ENCODE measurements at regions of chr4 and their contacts with region 1.

Region 1: DNA sequence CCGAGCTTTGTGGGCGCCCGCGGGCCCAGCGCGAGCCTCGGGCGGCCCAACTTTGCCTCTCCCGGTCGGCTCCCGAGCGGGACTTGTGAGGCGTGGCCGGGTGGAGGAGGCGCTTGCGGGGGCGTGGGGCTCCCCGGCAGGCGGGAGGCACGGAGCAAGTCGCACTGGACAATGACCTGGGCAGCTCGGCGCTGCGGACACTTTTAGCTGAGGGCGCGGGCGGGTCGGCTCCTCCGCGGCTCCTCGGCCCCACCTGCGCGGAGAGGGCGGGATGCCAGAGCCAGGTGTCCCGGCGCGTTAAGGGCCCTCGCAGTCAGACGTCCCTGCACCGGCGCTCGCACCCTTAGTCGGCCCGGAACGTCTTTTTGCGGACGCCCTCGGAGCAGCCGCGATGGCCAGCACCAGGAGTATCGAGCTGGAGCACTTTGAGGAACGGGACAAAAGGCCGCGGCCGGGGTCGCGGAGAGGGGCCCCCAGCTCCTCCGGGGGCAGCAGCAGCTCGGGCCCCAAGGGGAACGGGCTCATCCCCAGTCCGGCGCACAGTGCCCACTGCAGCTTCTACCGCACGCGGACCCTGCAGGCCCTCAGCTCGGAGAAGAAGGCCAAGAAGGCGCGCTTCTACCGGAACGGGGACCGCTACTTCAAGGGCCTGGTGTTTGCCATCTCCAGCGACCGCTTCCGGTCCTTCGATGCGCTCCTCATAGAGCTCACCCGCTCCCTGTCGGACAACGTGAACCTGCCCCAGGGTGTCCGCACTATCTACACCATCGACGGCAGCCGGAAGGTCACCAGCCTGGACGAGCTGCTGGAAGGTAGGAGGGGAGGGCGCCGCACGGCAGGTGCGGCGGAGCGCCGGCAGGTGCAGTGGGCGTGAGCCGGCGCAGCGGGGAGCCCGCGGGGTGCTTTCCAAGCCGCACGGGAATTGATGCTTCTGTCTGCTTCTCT is 664 bp downstream of the DCLK2 start:
- DNase-seq: peak; percentile 6
- H3K4me3 ChIP-seq: peak overlapping the region; percentile 54 to 58
- H3K27ac ChIP-seq: peak overlapping the region; percentile 77 to 81
- H3K4me1 ChIP-seq: no peaks in the 10 kb centered on the region
- H3K27me3 ChIP-seq: no peaks in the 10 kb centered on the region
- CTCF ChIP-seq: no peak
- POLR2A ChIP-seq: no peak

Region 2: GRCh38 chr4:150010525-150011126 is 68.3 kb before region 1 on chr4:
- intact Hi-C with region 1: loop called (anchors 5 kb)
- DNase-seq: peak; percentile 35
- H3K4me3 ChIP-seq: no peak overlapping the region
- H3K27ac ChIP-seq: no peak overlapping the region
- H3K4me1 ChIP-seq: no peaks in the 10 kb centered on the region
- H3K27me3 ChIP-seq: no peaks in the 10 kb centered on the region
- CTCF ChIP-seq: peak in 3 of 4 experiments; percentile 52 to 64 (median 55)
- POLR2A ChIP-seq: no peak

Region 3: DNA sequence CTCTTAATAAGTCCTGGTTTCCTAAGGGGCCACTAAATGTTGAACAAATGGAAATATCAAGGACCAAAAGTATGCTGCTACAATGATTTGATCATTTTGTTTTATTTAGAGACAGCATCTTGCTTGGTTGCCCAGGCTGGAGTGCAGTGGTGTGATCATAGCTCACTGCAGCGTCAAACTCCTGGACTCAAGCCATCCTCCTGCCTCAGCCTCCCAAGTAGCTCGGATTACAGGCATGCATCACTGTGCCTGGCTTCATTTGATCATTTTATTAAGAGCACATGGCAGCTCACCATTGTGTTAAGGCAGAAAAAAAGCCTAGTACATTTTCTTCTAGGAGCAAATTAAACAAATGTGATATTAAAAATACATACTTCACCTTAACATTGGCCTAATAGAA is 52.0 kb after region 1 on chr4:
- intact Hi-C with region 1: loop called (anchors 10 kb)
- DNase-seq: no peak
- H3K4me3 ChIP-seq: no peak overlapping the region
- H3K27ac ChIP-seq: no peak overlapping the region
- H3K4me1 ChIP-seq: no peaks in the 10 kb centered on the region
- H3K27me3 ChIP-seq: no peaks in the 10 kb centered on the region
- CTCF ChIP-seq: no peak
- POLR2A ChIP-seq: no peak

Region 4: DNA sequence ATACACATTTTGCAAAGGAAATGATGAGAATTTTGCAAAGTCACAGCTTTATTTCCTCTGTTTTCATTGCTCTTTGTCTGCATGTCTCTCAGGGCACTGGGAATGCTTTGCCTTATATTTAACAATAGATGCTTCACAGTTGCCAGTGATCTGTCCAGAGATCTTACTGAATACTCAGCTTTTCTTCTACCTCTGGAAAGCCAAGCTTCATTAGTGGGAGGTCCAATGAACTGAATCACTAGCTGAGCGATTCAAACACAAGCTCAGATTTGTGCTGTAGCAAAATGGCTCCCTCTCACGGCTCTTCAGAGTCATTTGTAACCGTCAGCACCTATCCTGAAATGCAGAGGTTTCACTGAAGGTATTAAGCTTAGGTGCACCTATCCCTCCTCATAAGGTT is 138.3 kb after region 1 on chr4:
- intact Hi-C with region 1: loop called (anchors 5 kb)
- DNase-seq: no peak
- H3K4me3 ChIP-seq: no peak overlapping the region
- H3K27ac ChIP-seq: no peak overlapping the region
- H3K4me1 ChIP-seq: no peaks in the 10 kb centered on the region
- H3K27me3 ChIP-seq: no peaks in the 10 kb centered on the region
- CTCF ChIP-seq: peak in 1 of 4 experiments; percentile 35
- POLR2A ChIP-seq: no peak

Region 5: DNA sequence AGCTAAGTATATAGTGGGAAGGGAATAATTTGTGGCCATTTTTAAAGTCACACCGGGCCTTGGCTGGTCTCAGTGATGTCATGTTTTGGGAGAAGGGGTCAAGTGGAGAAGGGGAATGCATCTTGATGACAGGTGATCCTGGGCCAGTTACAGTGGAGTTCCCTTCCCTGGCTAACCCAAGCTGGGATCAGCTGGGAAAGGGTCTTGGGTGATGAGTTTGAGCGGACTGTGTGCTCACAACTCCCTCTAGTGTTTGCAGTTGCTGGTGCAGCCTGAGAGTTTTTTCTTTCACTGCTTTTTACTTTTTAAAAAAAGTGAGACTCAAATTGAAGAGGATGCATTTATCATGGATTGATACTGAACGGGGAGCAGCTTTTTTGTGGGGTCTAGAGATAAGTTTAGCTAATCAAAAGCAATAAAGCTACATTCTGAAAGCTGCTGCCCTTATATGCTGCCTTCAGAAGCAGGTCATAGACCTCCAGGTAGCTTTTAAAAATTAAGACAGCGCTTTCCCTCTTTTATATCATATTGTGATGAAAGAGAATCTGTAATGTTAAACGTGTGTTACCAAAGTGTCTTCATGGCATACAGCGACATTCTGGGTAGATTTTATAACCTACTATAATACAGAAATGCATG is 164.0 kb after region 1 on chr4:
- intact Hi-C with region 1: loop called (anchors 2 kb)
- DNase-seq: no peak
- H3K4me3 ChIP-seq: no peak overlapping the region
- H3K27ac ChIP-seq: no peak overlapping the region
- H3K4me1 ChIP-seq: no peaks in the 10 kb centered on the region
- H3K27me3 ChIP-seq: no peaks in the 10 kb centered on the region
- CTCF ChIP-seq: peak; percentile 45 to 70 (median 64)
- POLR2A ChIP-seq: no peak

Region 6: DNA sequence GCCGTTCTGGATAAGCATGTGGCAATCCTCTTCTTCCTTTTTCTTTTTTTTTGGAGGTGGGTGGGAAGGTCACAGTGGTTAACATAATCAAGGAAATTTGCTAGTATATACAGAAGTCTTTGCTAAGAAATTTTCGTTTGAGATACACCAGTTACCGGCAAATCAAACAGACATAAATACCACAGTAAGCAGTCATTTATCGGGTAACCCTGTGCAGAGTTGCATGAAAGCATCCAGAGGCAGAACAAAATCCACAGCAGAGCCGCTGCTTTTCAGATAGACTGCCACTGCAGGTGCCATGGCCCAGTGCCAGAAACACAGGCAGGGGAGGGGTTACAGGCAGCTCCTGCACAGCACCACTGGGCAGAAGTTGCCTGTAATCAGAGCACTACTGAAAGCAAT is 324.0 kb after region 1 on chr4:
- intact Hi-C with region 1: no loop called
- DNase-seq: no peak
- H3K4me3 ChIP-seq: no peak overlapping the region
- H3K27ac ChIP-seq: no peak overlapping the region
- H3K4me1 ChIP-seq: no peaks in the 10 kb centered on the region
- H3K27me3 ChIP-seq: no peaks in the 10 kb centered on the region
- CTCF ChIP-seq: no peak
- POLR2A ChIP-seq: no peak

Measured in prostate gland (tissue), 2 donors.